HEK293 (cell line): ENCODE measurements at regions of chr1 and their contacts with region 1.

Region 1: DNA sequence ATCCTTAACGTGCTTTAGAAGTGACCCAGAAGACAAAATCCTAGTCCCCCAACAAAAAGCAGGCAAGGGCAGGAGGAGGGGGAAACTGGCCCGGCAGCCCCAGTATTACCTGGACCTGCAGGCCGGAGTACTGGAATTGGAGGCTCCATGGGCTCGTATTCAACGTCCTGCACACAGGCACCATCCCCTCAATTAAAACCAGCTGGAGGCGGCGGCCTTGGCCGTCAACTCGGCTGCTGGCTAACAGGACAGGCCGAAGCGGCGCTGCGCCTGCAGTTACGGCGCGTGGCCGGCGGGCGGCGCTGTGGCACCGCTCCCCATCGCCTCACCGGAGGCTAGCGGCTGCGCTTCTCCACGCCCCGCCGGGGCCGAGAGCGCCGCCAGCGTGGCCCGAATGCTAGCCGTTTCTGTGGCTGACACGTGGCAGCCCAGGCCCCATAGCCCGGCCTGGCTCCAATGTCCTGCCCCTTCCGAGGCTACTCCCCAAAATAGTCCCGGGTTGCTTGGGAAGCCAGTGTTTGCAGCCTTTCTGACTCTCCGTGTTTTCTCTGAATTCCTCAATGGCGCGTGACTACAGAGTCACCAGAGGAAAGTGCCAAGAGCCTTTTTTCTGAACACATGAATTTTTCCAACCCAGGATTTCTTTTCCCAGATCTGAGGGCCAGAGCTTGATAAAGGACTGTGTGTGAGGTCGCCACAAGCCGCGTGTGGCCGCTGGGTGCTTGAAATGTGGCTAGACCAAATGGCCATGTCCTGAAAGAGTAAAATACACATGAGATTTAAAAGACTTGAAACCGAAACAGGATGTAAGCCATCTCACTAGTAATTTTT is 82.5 kb downstream of the HHIPL2 start:
- H3K4me3 ChIP-seq: peak overlapping the region; percentile 68
- H3K27ac ChIP-seq: peak overlapping the region; percentile 43; the same call in 1 of the 2 replicates
- H3K4me1 ChIP-seq: no peaks in the 10 kb centered on the region
- CTCF ChIP-seq: peak; percentile 93

Region 2: DNA sequence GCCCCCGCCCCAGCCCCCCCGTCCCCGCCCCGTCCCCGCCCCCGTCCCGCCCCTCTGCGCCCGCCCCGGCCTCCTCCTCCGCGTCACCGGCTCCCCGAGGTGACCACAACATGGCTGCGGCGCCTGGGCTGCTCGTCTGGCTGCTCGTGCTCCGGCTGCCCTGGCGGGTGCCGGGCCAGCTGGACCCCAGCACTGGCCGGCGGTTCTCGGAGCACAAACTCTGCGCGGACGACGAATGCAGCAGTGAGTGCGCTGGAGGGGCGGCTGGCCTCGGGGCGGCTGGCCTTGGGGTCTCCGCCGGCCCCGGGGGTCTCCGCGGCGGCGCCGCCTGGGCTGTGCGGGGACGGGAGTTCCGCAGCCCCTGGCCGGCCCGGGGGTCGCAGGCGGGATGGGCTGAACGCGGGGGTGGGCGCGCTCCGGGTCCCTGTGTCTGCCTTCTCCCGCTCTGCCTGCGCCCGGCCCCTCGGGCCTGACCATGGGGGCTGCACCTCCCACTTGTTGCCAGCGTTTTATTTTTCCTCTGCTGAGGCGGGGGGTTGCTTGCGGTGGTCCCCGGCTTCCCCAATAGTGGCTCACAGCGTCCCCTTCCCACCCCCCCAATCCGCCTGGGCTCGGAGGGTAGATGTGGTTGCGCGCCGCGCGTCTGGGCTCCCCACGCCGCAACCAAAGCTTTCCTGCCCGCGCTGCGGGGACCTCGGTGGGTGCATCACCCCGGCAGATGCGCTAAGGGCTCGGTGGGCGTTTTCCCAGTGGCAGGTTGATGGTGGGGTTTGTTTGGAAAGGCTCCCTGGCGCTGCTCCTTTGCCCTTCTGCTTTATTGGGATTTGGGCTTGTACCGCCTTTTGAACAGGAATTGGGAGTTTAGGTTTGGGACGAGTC is 152.8 kb after region 1 on chr1 and contains the start of gene MIA3:
- CTCF ChIA-PET with region 1: interaction called, 10 read pairs
- POLR2A ChIA-PET with region 1: interaction called, 3 read pairs
- H3K4me3 ChIP-seq: peak within 1 kb of the TSS; percentile 98
- H3K27ac ChIP-seq: peak within 1 kb of the TSS; percentile 75; the same call in 1 of the 2 replicates
- H3K4me1 ChIP-seq: no peaks in the 10 kb centered on the region
- CTCF ChIP-seq: no peak

Region 3: GRCh38 chr1:222634180-222635013 is 169.0 kb after region 1 on chr1:
- CTCF ChIA-PET with region 1: interaction called, 52 read pairs
- POLR2A ChIA-PET with region 1: interaction called, 4 read pairs
- H3K4me3 ChIP-seq: no peak overlapping the region
- H3K27ac ChIP-seq: no peak overlapping the region
- H3K4me1 ChIP-seq: no peaks in the 10 kb centered on the region
- CTCF ChIP-seq: peak; percentile 46; the same call in 1 of the 2 replicates

Region 4: DNA sequence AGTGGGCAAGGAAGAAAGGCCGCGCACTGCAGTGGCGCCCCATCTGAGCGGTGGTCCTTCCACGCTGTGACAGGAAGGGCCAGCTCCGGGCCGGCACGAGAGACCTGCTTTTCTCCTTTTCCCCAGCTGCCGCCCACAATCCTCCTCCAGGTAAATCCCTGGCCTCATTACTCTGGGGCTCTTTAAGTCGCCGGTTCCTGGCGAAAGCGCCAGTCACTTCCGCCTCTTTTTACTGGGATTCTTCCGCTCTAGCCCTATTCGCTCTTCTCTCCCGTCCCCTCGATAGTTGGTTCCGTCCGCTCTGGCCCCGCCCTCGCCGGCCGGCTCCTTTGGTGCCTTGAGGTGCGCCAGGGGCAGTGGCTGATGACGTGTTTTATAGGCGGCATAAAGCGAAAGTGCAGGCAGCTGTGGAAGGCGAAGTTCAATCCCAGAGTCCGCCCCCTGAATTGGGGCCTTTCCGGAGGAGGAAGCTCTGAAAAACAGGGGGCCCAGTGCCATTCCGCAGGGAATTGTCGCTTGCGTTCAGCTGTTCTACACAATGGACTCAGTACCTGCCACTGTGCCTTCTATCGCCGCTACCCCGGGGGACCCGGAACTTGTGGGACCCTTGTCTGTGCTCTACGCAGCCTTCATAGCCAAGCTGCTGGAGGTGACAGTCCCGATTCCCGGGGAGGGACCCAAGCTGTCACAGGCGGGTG is 178.7 kb after region 1 on chr1:
- CTCF ChIA-PET with region 1: interaction called, 25 read pairs
- POLR2A ChIA-PET with region 1: no interaction called
- H3K4me3 ChIP-seq: peak overlapping the region; percentile 60
- H3K27ac ChIP-seq: peak overlapping the region; percentile 77
- H3K4me1 ChIP-seq: peaks cover 3% of the 10 kb centered on the region; the same call in 1 of the 2 replicates
- CTCF ChIP-seq: peak; percentile 35